Activated CD8-positive, alpha-beta T cell treated with anti-CD3 and anti-CD28 coated beads, Interleukin-2, amount 10 ng/mL, durations not matched to agents 7 days and 5 days (primary cell): ENCODE measurements at regions of chr12 and their contacts with region 1.

Region 1: DNA sequence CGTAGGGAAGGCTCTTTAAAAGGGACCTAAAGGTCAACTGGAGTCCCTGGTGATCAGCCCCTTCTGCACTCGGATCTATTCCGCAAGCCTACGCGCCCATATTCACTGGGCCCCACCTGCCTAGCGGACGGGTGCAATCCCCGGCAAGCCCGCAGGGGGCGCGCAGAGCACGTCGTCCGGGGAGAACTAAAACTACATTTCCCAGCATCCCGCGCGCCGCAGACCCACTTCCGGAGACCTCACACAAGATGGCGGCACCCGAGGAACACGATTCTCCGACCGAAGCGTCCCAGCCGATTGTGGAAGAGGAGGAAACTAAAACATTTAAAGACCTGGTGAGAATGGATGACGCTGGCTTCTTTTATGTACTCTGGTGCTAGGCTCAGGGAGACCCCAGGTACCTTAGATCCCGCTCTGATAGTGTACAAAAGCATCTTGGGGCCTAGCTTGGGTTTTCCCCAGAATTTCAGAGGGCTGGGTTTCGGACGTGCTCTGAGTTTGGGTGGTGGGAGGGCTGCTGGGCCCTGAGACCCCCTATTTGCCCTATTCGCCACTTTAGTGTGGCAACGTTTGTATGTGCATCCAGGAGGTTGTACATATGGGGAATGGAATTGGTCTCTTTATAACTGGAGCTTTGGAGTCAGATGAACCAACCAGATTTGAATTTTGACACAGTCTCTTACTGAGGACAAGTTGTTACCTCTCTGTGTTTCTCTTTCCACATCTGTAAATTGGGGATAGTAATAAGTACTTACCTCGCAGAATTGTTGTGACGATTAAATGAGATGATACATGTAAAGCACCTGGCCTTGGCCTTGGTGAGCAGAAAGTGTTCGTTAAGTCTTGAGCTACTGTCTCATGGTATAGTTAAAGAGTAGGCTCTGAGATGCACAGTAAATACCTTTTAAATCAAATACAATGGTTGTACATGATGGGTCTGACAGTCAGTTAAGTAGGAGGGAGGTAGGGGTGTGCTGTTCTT is at the start of gene DDX47:
- DNase-seq: peak; percentile 98
- ATAC-seq: peak; percentile 85
- H3K4me3 Mint-ChIP-seq: peak within 1 kb of the TSS; percentile 93
- H3K27ac Mint-ChIP-seq: peak within 1 kb of the TSS; percentile 88
- H3K4me1 Mint-ChIP-seq: peaks cover 79% of the 10 kb centered on the region
- H3K27me3 Mint-ChIP-seq: no peaks in the 10 kb centered on the region
- total RNA-seq, gene DDX47: 56.8 to 57.8 TPM

Region 2: GRCh38 chr12:12786716-12787601 is 26.5 kb before region 1 on chr12:
- CTCF ChIA-PET with region 1: interaction called, 65 read pairs
- POLR2A ChIA-PET with region 1: interaction called, 4 read pairs
- DNase-seq: peak; percentile 72
- ATAC-seq: peak; percentile 94
- H3K4me3 Mint-ChIP-seq: peak overlapping the region; percentile 80
- H3K27ac Mint-ChIP-seq: peak overlapping the region; percentile 87
- H3K4me1 Mint-ChIP-seq: peaks cover 43% of the 10 kb centered on the region
- H3K27me3 Mint-ChIP-seq: no peaks in the 10 kb centered on the region

Region 3: GRCh38 chr12:12797794-12798152 is 15.6 kb before region 1 on chr12:
- CTCF ChIA-PET with region 1: interaction called, 15 read pairs
- POLR2A ChIA-PET with region 1: interaction called, 6 read pairs
- DNase-seq: no peak
- ATAC-seq: no peak
- H3K4me3 Mint-ChIP-seq: no peak overlapping the region
- H3K27ac Mint-ChIP-seq: no peak overlapping the region
- H3K4me1 Mint-ChIP-seq: peaks cover 21% of the 10 kb centered on the region
- H3K27me3 Mint-ChIP-seq: no peaks in the 10 kb centered on the region

Region 4: DNA sequence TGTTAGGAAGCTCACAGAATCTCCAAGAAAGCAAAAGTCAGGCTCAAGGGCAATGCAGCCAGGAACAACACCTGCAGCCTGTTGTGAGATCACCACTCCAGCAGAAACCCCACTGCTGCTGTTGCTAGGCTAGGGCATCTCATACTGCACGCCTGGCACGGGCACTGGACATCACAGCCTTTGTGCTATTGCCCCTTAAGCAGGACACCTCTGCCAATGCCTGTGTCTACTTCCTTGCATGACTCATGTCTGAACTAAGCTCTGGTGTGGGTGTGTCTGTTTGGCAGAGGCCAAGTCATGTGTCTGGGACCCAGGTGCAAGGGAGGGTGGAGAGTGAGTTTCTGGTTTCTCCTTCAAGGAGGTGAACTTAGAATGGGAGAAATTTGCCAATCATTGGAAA is 10.2 kb before region 1 on chr12:
- CTCF ChIA-PET with region 1: interaction called, 15 read pairs
- POLR2A ChIA-PET with region 1: interaction called, 6 read pairs
- DNase-seq: peak; percentile 71
- ATAC-seq: peak; percentile 74
- H3K4me3 Mint-ChIP-seq: peak overlapping the region; percentile 33
- H3K27ac Mint-ChIP-seq: peak overlapping the region; percentile 81
- H3K4me1 Mint-ChIP-seq: peaks cover 60% of the 10 kb centered on the region
- H3K27me3 Mint-ChIP-seq: no peaks in the 10 kb centered on the region